H1 (cell line): ENCODE measurements at regions of chr5 and their contacts with region 1.

Region 1: GRCh38 chr5:139863855-139864558 is 68.4 kb downstream of the PSD2 start:
- DNase-seq: peak in 1 of 2 experiments; percentile 89
- H3K4me3 ChIP-seq: no peak overlapping the region
- H3K27ac ChIP-seq: no peak overlapping the region
- H3K4me1 ChIP-seq: no peaks in the 10 kb centered on the region
- H3K27me3 ChIP-seq: no peaks in the 10 kb centered on the region
- CTCF ChIP-seq: peak; percentile 72 to 89 (median 84)
- EP300 ChIP-seq: no peak
- POLR2A ChIP-seq: no peak
- RAD21 ChIP-seq: peak; percentile 79 to 86

Region 2: DNA sequence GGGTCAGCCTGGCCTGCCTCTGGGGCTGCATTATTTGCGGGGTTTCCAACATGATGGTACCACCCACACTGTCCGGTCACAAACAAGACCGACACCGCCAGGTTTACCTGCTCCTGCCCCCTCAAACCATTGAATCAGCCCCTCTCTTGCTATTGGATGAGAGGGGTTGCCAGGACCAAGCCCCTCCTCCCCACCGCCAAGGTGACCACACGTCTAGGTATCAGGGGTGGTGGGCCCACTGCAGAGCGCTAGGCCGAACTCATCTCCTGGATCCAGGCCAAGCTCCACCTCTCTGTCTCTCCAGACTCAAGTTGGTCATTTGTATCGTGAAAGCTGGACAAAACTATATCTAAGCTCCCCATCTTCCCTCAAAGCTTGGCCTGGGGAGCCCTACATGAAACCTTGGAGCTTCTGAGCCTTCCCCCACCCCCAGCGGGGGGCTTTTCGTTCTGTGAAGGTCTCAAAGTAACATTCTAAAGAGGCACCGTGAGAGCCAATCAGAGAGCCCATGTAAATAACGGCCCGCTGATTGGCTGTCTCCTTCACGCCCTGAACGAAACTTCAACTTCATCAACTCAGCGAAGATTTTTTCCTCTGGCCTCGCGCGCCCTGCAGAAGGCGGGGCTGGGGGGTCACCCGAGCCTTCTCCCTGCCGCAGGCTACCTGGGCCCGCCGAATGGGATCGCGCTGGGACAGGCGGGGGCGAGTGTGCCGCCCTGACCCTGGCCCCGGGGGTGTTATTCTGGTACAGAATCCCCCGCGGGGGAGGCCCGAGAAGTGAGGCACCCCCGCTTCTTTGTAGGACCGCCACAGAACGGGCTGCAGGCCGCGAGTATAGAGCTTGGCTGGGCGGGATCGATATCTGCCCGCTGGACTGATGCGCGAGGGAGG is 118.0 kb before region 1 on chr5:
- CTCF ChIA-PET with region 1: no interaction called
- POLR2A ChIA-PET with region 1: no interaction called
- DNase-seq: peak; percentile 75 to 89
- H3K4me3 ChIP-seq: peak overlapping the region; percentile 30 to 64 (median 56)
- H3K27ac ChIP-seq: no peak overlapping the region
- H3K4me1 ChIP-seq: peaks cover 3 to 44% (median 29%) of the 10 kb centered on the region in 4 experiments
- H3K27me3 ChIP-seq: peaks cover 24 to 50% (median 42%) of the 10 kb centered on the region in 4 experiments
- CTCF ChIP-seq: no peak
- EP300 ChIP-seq: no peak
- POLR2A ChIP-seq: no peak
- RAD21 ChIP-seq: no peak

Region 3: DNA sequence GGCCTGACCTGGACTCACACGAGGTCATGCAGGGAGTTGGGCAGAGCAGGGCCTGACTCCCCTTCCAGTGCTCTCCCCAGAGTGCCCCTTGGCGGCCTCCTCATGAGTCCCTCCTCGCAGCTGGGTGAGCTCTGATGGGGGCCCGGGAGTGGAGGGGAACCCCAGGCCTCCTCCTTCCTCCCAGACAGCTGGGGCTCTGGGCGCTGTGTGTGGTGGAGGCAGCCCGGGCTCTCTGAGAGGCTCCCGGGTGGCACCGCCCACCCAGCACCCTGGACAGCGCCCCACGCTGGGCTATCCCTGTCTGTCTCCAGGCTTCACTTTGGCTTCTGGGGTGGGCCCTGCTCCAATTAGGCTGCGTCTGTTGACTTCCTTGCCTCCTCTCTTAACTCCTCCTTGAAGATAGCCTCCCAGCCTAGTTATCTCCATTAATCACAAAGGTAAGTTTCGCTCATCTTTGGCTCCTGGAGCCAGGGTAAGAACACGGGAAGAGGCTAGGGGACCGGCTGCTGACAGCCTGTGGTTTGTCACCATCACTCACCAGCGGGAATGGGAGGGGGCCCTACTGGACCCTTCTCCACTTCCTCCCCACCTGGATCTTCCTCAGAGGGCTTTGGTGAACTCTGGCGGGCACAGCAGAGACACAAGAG is 55.4 kb before region 1 on chr5:
- CTCF ChIA-PET with region 1: interaction called, 10 read pairs
- POLR2A ChIA-PET with region 1: no interaction called
- DNase-seq: peak in 1 of 2 experiments; percentile 88
- H3K4me3 ChIP-seq: no peak overlapping the region
- H3K27ac ChIP-seq: no peak overlapping the region
- H3K4me1 ChIP-seq: no peaks in the 10 kb centered on the region
- H3K27me3 ChIP-seq: peaks cover 0 to 3% (median 1%) of the 10 kb centered on the region in 4 experiments; a peak in 1 of 7 replicates
- CTCF ChIP-seq: no peak
- EP300 ChIP-seq: no peak
- POLR2A ChIP-seq: no peak
- RAD21 ChIP-seq: no peak

Region 4: GRCh38 chr5:139844472-139845145 is 19.4 kb before region 1 on chr5:
- CTCF ChIA-PET with region 1: interaction called, 42 read pairs
- POLR2A ChIA-PET with region 1: interaction called, 3 read pairs
- DNase-seq: peak; percentile 64 to 92
- H3K4me3 ChIP-seq: no peak overlapping the region
- H3K27ac ChIP-seq: no peak overlapping the region
- H3K4me1 ChIP-seq: peaks cover 0 to 2% (median 1%) of the 10 kb centered on the region in 4 experiments; a peak in 5 of 7 replicates
- H3K27me3 ChIP-seq: peaks cover 16 to 50% (median 44%) of the 10 kb centered on the region in 4 experiments
- CTCF ChIP-seq: peak; percentile 93 to 97 (median 96)
- EP300 ChIP-seq: no peak
- POLR2A ChIP-seq: no peak
- RAD21 ChIP-seq: peak; percentile 88 to 90

Region 5: DNA sequence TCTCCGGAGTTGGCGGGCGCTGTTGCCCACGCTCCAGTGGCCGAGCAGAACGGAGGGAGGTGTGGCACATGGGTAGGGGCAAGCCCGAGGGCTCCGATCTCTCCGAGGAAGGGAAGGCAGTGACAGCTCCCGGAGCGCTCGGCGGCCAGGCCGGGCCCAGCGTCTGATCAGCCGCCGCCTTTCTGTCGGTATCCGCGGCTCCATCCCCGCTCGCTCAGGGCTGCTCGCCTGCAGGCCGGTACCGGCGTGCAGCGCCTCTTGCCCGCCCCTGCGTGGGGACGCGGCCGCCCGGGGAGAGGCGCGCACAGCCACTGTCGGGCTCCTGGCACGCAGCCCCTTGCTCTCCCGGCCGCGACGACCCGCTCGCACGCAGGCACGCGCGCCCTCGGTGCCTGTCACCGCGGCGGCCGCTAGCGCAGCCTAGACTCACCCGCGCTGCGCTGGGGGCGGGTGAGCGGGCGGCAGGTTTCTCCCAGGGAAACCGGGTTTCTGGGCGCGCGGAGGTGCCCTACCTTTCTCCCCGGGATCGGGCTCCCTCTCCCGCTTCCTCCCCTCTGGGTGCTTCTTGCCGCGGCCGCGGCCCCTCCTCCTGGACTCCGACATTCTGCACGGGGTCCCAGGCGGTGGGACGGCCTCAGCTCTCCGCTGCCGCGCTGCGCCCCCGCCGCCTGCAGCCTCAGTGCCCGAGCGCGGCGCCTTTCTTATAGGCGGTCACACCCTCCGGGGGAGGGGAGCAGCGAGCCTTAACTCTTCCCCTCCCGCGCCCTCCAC is 40.0 kb after region 1 on chr5:
- CTCF ChIA-PET with region 1: interaction called, 19 read pairs
- POLR2A ChIA-PET with region 1: no interaction called
- DNase-seq: peak in 1 of 2 experiments; percentile 78
- H3K4me3 ChIP-seq: peak overlapping the region; percentile 37 to 81 (median 59)
- H3K27ac ChIP-seq: no peak overlapping the region
- H3K4me1 ChIP-seq: peaks cover 0 to 23% (median 10%) of the 10 kb centered on the region in 4 experiments; a peak in 6 of 7 replicates
- H3K27me3 ChIP-seq: peaks cover 35 to 77% (median 59%) of the 10 kb centered on the region in 4 experiments
- CTCF ChIP-seq: no peak
- EP300 ChIP-seq: no peak
- POLR2A ChIP-seq: no peak
- RAD21 ChIP-seq: no peak

Region 6: DNA sequence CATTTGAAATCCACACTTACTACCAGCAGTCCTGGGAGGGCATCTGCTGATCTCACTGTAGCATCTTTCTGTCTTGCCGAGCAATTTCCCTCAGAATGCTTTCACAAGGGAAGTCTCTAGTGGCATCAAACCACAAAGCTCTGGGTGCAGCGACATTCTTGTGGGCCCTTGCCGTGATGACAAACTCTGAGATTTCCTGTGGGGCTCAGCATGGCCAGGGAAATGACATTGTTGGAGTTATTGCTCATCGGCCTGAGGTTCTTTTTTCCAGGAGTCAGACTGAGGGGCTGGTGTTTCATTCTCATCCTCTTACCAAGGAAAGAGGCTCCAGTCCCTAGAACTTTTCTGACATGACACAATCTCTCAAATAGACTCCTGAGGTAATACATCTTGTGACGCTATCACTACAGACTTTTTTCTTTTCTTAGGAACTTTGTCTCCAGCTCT is 387.5 kb after region 1 on chr5:
- CTCF ChIA-PET with region 1: no interaction called
- POLR2A ChIA-PET with region 1: no interaction called
- DNase-seq: no peak
- H3K4me3 ChIP-seq: no peak overlapping the region
- H3K27ac ChIP-seq: no peak overlapping the region
- H3K4me1 ChIP-seq: peaks cover 0 to 4% (median under 1%) of the 10 kb centered on the region in 4 experiments; a peak in 4 of 7 replicates
- H3K27me3 ChIP-seq: no peaks in the 10 kb centered on the region
- CTCF ChIP-seq: no peak
- EP300 ChIP-seq: no peak
- POLR2A ChIP-seq: no peak
- RAD21 ChIP-seq: no peak